CD4-positive, alpha-beta memory T cell (primary cell): ENCODE measurements at regions of chr2 and their contacts with region 1.

Region 1: DNA sequence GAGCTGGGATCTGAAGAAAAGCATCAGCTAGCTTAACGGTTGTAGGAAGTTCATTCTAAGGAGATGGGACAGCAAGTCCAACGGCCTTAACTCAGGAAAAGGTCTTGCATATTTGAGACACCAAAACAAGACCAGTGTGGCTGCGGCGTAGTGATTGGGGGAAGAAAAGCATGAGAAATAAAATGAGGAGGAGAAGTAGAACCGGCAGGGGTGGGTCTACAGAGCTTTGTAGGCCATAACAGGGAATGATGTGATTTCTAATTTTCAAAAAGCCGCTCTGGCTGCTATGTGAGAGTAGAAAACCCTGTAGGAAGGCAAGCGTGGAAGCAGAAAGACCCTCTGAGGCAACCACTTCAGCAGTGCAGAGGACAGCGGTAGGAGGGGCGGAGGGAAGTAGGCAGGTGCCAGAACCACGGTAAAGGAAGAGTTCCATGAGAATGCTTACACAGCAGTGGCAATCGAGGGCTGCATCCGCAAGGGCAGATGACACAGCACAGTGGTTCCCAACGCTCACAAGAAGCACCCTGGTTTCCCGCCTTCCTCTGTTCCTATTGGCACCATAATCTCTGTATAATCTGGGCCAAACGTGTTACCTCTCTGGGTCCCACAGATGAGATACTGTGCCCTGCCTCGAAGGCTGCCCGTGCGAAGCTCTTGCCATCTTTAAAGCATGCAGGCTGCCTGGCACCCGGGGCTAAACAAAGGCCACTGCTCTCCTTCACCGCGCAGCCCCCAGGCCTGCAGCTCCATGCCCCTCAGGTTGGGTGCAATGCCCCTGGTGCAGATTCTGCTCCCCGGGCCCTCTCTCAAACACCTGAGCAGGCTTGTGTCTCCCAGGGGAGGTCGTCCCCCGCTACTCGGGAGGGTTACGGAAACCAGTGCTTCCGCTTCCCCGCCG is 791 bp downstream of the ANKRD39 start:
- DNase-seq: peak in 3 of 5 donors; percentile 29 to 40 (median 38)
- H3K4me3 ChIP-seq: peak overlapping the region; percentile 20 to 70
- H3K4me3 Mint-ChIP-seq: peak overlapping the region; percentile 86 to 94 (median 90)
- H3K27ac ChIP-seq: peak overlapping the region; percentile 80
- H3K27ac Mint-ChIP-seq: peak overlapping the region; percentile 69 to 94 (median 86)
- H3K4me1 ChIP-seq: peaks cover 44% of the 10 kb centered on the region
- H3K4me1 Mint-ChIP-seq: peaks cover 22 to 63% (median 36%) of the 10 kb centered on the region in 4 donors
- H3K27me3 ChIP-seq: no peaks in the 10 kb centered on the region
- H3K27me3 Mint-ChIP-seq: no peaks in the 10 kb centered on the region

Region 2: GRCh38 chr2:96131152-96131812 is 725.7 kb before region 1 on chr2:
- CTCF ChIA-PET with region 1: no interaction called
- POLR2A ChIA-PET with region 1: no interaction called
- intact Hi-C with region 1: no loop called
- DNase-seq: no peak
- H3K4me3 ChIP-seq: no peak overlapping the region
- H3K4me3 Mint-ChIP-seq: no peak overlapping the region
- H3K27ac ChIP-seq: no peak overlapping the region
- H3K27ac Mint-ChIP-seq: peak overlapping the region in 4 of 7 donors; percentile 3 to 53 (median 25)
- H3K4me1 ChIP-seq: no peaks in the 10 kb centered on the region
- H3K4me1 Mint-ChIP-seq: peaks cover 0 to 11% (median 3%) of the 10 kb centered on the region in 4 donors
- H3K27me3 ChIP-seq: no peaks in the 10 kb centered on the region
- H3K27me3 Mint-ChIP-seq: no peaks in the 10 kb centered on the region

Region 3: GRCh38 chr2:96739633-96740428 is 117.2 kb before region 1 on chr2 and contains the start of gene LMAN2L:
- CTCF ChIA-PET with region 1: interaction called, 3 read pairs
- POLR2A ChIA-PET with region 1: interaction called, 3 read pairs
- intact Hi-C with region 1: loop called (anchors 5 kb)
- DNase-seq: peak; percentile 94 to 99 (median 98)
- H3K4me3 ChIP-seq: peak within 1 kb of the TSS; percentile 63 to 82
- H3K4me3 Mint-ChIP-seq: peak within 1 kb of the TSS; percentile 93 to 100 (median 98)
- H3K27ac ChIP-seq: peak within 1 kb of the TSS; percentile 75
- H3K27ac Mint-ChIP-seq: peak within 1 kb of the TSS; percentile 90 to 98 (median 97)
- H3K4me1 ChIP-seq: peaks cover 36% of the 10 kb centered on the region
- H3K4me1 Mint-ChIP-seq: peaks cover 24 to 53% (median 39%) of the 10 kb centered on the region in 4 donors
- H3K27me3 ChIP-seq: no peaks in the 10 kb centered on the region
- H3K27me3 Mint-ChIP-seq: no peaks in the 10 kb centered on the region
- total RNA-seq, gene LMAN2L: 10.1 to 12.6 TPM

Region 4: DNA sequence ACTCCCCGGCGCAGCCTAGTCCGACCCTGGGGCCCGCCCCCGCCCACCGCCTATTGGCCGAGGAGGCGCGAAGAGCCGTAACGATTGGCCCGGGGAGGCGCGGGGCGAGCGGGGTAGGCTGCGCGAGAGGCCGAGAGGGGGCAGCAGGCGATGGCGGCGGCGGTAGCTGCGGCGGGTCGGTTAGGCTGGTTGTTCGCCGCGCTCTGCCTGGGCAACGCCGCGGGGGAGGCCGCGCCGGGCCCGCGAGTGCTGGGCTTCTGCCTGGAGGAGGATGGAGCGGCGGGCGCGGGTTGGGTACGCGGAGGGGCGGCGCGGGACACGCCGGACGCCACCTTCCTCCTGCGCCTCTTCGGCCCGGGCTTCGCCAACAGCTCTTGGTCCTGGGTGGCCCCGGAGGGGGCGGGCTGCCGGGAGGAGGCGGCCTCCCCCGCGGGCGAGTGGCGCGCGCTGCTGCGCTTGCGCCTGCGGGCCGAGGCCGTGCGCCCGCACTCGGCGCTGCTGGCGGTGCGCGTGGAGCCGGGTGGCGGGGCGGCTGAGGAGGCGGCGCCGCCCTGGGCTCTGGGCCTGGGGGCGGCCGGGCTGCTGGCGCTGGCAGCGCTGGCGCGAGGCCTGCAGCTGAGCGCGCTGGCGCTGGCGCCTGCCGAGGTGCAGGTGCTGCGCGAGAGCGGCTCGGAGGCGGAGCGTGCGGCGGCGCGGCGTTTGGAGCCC is 40.7 kb before region 1 on chr2 and contains the start of gene CNNM3:
- CTCF ChIA-PET with region 1: interaction called, 32 read pairs
- POLR2A ChIA-PET with region 1: interaction called, 58 read pairs
- intact Hi-C with region 1: loop called (anchors 1 kb)
- DNase-seq: peak; percentile 93 to 97 (median 94)
- H3K4me3 ChIP-seq: peak within 1 kb of the TSS; percentile 82 to 83
- H3K4me3 Mint-ChIP-seq: peak within 1 kb of the TSS; percentile 93 to 97 (median 95)
- H3K27ac ChIP-seq: peak within 1 kb of the TSS; percentile 77
- H3K27ac Mint-ChIP-seq: peak within 1 kb of the TSS; percentile 74 to 96 (median 93)
- H3K4me1 ChIP-seq: peaks cover 57% of the 10 kb centered on the region
- H3K4me1 Mint-ChIP-seq: peaks cover 50 to 76% (median 61%) of the 10 kb centered on the region in 4 donors
- H3K27me3 ChIP-seq: no peaks in the 10 kb centered on the region
- H3K27me3 Mint-ChIP-seq: no peaks in the 10 kb centered on the region
- total RNA-seq, gene CNNM3: 55.1 to 57.4 TPM

Region 5: DNA sequence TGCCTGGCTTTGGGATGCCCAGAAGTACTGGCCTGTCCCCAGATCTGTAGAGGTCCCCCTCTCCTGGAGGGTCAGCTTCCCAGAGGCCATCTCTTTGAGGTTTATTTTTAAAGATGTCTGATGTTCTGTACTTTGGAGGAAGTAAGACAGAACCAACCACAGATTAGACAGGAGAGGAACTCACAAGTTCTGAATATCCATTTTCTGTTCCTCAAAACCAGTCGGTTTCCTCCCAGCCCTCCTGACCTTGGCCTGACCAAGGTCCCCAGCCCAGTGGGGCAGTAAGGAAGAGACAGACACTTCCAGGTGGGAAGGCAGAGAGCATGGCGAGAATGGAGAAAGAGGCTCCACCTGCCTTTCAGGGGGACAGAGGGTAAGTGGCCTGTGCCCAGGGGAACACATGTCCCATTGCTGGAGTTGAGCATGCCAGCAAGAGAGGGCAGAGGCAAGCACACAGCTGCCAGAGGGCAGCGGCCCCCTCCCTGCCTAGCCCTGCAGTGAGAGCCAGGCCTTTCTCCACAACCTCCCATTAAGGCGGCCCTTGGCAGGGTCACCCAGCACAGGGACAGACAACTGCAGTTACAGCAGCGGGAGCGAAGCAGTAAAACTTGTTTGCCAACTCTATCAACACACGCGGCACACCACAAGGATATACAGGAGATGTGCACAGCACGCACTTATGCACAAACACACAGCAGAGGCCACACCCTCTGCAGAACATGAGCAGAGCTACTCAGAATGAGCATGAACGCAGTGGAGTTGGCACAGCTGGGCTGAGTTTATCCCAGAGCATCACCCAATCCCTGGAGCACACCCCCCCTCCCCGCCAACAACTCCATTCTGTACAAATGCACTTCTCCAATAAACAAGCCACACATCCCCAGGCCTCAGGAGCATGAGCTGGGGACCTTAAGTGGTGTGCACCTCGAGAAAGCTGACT is 31.3 kb after region 1 on chr2:
- CTCF ChIA-PET with region 1: interaction called, 23 read pairs
- POLR2A ChIA-PET with region 1: interaction called, 8 read pairs
- intact Hi-C with region 1: no loop called
- DNase-seq: no peak
- H3K4me3 ChIP-seq: no peak overlapping the region
- H3K4me3 Mint-ChIP-seq: no peak overlapping the region
- H3K27ac ChIP-seq: no peak overlapping the region
- H3K27ac Mint-ChIP-seq: peak overlapping the region in 4 of 7 donors; percentile 50 to 86 (median 78)
- H3K4me1 ChIP-seq: peaks cover 30% of the 10 kb centered on the region
- H3K4me1 Mint-ChIP-seq: peaks cover 30 to 46% (median 36%) of the 10 kb centered on the region in 4 donors
- H3K27me3 ChIP-seq: no peaks in the 10 kb centered on the region
- H3K27me3 Mint-ChIP-seq: no peaks in the 10 kb centered on the region

Region 6: DNA sequence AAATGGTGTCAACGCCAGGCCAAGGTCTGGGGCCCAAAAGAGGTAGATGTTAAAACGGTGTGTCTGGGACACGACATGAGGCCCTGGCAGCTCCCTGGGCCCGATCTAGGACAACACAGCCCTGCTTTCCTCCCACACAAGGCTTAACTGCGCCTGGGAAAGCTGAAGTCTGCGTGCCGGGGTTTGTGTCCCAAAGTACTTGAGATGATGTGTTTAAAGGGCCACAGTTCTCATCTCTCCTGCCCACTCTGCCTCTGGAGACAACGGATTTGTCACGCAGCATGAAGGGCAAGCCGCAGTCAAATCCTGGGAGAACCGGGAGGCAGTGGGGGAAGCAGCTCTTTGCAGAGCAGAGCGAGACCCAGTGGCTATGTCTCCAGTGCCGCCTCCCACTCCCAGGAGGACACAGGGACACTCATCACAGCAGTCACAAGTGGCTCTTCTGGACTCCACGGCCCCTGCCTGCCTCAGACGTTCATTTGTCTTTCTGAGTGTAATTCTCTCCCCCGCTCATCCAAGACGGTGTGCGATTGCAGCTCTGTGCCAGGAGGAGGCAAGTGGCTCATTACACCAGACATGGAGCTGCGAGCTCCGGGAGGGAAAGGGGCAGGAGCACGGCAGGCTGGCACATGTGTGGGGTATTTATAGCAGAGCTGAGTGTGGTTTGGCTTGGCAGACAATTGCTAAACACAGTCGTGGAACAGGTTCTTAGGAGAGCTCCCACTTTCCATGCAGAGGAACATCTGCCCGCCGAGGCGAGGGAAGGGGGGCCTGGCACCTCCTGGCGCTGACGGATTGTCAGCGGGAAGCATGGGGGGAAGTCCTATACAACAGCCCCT is 70.6 kb after region 1 on chr2:
- CTCF ChIA-PET with region 1: interaction called, 17 read pairs
- POLR2A ChIA-PET with region 1: interaction called, 23 read pairs
- intact Hi-C with region 1: no loop called
- DNase-seq: no peak
- H3K4me3 ChIP-seq: no peak overlapping the region
- H3K4me3 Mint-ChIP-seq: no peak overlapping the region
- H3K27ac ChIP-seq: no peak overlapping the region
- H3K27ac Mint-ChIP-seq: no peak overlapping the region
- H3K4me1 ChIP-seq: peaks cover 27% of the 10 kb centered on the region
- H3K4me1 Mint-ChIP-seq: peaks cover 17 to 40% (median 24%) of the 10 kb centered on the region in 4 donors
- H3K27me3 ChIP-seq: no peaks in the 10 kb centered on the region
- H3K27me3 Mint-ChIP-seq: peaks cover 0 to 1% of the 10 kb centered on the region in 2 donors

Region 7: DNA sequence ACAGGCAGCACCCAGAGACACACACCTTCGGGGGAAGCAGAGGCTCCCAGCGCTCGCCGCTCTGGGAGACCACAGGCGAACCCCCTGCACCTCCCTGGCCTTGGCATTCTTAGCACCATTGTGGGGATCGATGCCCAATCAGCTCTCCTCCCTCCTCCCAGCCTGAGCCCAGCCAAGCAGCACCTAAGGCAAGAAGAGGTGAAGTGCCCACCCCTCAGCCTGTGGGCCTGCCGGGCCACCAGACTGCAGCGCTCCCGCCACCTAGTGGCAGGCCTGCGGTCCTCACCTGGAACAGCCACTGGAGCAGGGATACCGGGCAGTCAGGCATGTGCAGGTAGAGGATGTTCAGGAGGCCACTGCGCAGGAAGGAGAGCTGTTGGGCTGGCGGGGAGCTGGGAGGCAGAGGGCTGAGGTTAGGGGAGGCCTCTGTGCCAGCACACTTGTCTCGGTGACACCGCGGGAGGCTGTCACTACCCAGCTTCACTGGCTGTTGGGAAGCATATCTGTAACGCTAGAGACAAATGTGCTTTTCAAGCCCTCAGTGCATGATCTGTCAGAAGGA is 94.1 kb after region 1 on chr2:
- CTCF ChIA-PET with region 1: interaction called, 624 read pairs
- POLR2A ChIA-PET with region 1: interaction called, 194 read pairs
- intact Hi-C with region 1: loop called (anchors 1 kb)
- DNase-seq: peak; percentile 68 to 79 (median 78)
- H3K4me3 ChIP-seq: no peak overlapping the region
- H3K4me3 Mint-ChIP-seq: peak overlapping the region in 3 of 8 donors; percentile 1 to 37 (median 24)
- H3K27ac ChIP-seq: no peak overlapping the region
- H3K27ac Mint-ChIP-seq: peak overlapping the region in 1 of 7 donors; percentile 61
- H3K4me1 ChIP-seq: peaks cover 28% of the 10 kb centered on the region
- H3K4me1 Mint-ChIP-seq: peaks cover 16 to 34% (median 26%) of the 10 kb centered on the region in 4 donors
- H3K27me3 ChIP-seq: no peaks in the 10 kb centered on the region
- H3K27me3 Mint-ChIP-seq: no peaks in the 10 kb centered on the region

Region 8: GRCh38 chr2:98091738-98092137 is 1234.7 kb after region 1 on chr2:
- CTCF ChIA-PET with region 1: no interaction called
- POLR2A ChIA-PET with region 1: no interaction called
- intact Hi-C with region 1: no loop called
- DNase-seq: no peak
- H3K4me3 ChIP-seq: no peak overlapping the region
- H3K4me3 Mint-ChIP-seq: no peak overlapping the region
- H3K27ac ChIP-seq: no peak overlapping the region
- H3K27ac Mint-ChIP-seq: no peak overlapping the region
- H3K4me1 ChIP-seq: peaks cover 8% of the 10 kb centered on the region
- H3K4me1 Mint-ChIP-seq: peaks cover 2 to 9% (median 7%) of the 10 kb centered on the region in 4 donors
- H3K27me3 ChIP-seq: peaks cover 5% of the 10 kb centered on the region
- H3K27me3 Mint-ChIP-seq: peaks cover 16 to 19% of the 10 kb centered on the region in 2 donors

Region 9: GRCh38 chr2:98455494-98455976 is 1598.5 kb after region 1 on chr2:
- CTCF ChIA-PET with region 1: no interaction called
- POLR2A ChIA-PET with region 1: no interaction called
- intact Hi-C with region 1: no loop called
- DNase-seq: peak; percentile 48 to 86 (median 64)
- H3K4me3 ChIP-seq: peak overlapping the region in 1 of 2 donors; percentile 18
- H3K4me3 Mint-ChIP-seq: peak overlapping the region; percentile 11 to 84 (median 69)
- H3K27ac ChIP-seq: peak overlapping the region; percentile 69
- H3K27ac Mint-ChIP-seq: peak overlapping the region; percentile 85 to 97 (median 94)
- H3K4me1 ChIP-seq: peaks cover 99% of the 10 kb centered on the region
- H3K4me1 Mint-ChIP-seq: peaks cover 80 to 100% (median 92%) of the 10 kb centered on the region in 4 donors
- H3K27me3 ChIP-seq: no peaks in the 10 kb centered on the region
- H3K27me3 Mint-ChIP-seq: no peaks in the 10 kb centered on the region